Prostate gland (tissue), 2 donors: ENCODE measurements at regions of chr2 and their contacts with region 1.

Region 1: DNA sequence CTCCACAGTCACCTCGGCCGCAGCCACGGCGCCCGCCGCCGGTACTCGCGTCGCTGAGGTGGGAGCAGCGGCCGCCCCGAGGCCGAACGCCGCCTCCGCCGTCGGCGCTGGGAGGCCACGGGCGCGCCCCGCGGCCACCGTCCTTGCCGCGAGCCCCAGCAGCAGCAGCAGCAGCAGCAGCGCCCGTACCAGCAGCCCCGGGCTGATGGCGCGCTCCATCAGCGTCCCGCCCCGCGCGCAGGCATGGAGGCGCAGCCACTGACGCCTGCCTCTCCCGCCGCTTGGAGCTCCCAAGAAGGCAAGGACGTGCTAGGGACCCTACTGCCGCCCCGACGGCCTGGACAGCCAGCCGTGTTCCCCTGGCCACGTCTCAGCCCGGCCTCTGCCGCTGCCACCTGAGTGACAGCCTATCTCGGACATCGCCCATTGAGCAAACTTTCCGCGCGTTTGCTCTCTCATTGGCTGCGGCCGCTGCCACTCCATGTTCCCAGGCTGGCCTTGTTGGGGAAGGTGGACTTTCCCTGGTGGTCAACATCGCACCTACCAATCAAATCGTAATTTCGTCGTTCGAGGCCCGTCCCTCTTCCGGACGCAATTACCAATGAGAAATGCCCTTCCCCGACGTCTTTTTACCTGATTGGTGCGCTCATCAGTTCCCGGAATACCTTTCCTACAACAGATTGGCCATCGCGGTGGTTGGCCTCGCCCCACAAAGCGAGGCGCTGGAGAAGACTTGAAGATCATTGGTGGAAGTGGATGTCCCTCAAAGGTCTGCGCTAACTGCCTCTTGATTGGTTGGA is at the start of gene EIF2AK3:
- DNase-seq: peak; percentile 100
- H3K4me3 ChIP-seq: peak within 1 kb of the TSS; percentile 93
- H3K27ac ChIP-seq: peak within 1 kb of the TSS; percentile 95 to 97
- H3K4me1 ChIP-seq: peaks cover 4% of the 10 kb centered on the region
- H3K27me3 ChIP-seq: no peaks in the 10 kb centered on the region
- CTCF ChIP-seq: peak in 3 of 4 experiments; percentile 12 to 78 (median 46)
- POLR2A ChIP-seq: peak; percentile 100
- total RNA-seq, gene EIF2AK3: 21.4 to 39.1 TPM

Region 2: DNA sequence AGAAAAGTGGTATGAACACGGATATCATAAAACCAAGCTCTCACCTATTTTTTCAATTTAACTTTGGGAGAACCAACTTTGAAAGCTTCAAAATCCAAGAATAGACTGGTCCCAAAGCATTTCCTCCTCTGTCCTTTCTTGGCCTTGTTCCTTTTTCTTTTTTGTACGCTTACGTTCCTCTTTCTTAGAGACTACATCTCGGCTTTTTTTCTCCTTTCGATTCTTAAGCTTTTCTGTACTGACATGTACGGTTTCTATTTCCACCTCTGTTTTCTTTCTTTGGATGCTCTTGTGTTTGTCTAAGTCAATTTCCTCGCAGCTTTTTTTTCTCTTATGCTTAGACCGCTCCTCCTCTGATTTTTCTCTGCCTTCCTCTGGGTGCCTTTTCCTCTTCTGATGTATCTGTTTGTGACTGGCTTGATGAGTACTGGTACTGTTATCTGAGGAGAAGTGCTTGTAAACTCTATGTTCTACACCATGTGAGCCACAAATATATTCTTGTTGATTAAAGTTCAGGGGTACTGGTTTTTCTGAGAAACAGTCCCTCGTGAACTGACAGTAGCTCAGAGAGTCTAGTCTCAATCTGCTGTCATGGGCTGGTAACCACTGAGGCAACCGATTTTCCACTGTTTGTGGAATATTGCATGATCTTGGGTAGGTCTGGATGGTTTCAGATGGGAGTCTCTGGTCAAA is 599.4 kb before region 1 on chr2:
- intact Hi-C with region 1: no loop called
- DNase-seq: no peak
- H3K4me3 ChIP-seq: no peak overlapping the region
- H3K27ac ChIP-seq: no peak overlapping the region
- H3K4me1 ChIP-seq: no peaks in the 10 kb centered on the region
- H3K27me3 ChIP-seq: no peaks in the 10 kb centered on the region
- CTCF ChIP-seq: no peak
- POLR2A ChIP-seq: no peak

Region 3: DNA sequence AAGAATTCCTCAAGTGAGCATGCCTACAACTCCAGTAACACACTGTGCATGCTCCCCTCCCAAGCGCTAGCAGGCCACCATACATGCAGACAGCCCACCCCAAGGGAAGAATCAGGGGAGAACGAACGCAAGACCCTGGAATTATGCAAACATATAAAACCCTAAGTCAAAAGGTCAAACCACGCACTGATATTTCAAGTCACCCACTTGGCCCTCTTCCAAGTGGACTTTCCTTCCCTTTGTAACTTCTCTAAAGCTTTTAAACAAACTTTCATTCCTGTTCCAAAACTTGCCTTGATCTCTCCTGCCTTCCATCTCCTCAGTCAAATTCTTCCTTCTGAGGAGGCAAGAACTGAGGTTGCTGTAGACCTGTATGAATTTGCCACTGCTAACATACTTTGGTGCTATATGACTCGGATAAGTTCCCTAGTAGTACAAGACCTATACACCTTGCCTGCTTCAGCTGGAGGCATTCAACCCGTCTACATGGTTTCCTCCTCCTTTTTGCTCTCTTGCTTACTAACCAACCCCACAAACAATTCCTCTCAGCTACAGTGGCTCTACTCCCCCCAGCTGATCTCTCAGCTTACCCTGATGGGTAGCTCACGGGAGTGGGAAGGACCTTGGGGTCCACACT is 53.1 kb after region 1 on chr2:
- intact Hi-C with region 1: no loop called
- DNase-seq: no peak
- H3K4me3 ChIP-seq: no peak overlapping the region
- H3K27ac ChIP-seq: no peak overlapping the region
- H3K4me1 ChIP-seq: no peaks in the 10 kb centered on the region
- H3K27me3 ChIP-seq: no peaks in the 10 kb centered on the region
- CTCF ChIP-seq: no peak
- POLR2A ChIP-seq: no peak

Region 4: DNA sequence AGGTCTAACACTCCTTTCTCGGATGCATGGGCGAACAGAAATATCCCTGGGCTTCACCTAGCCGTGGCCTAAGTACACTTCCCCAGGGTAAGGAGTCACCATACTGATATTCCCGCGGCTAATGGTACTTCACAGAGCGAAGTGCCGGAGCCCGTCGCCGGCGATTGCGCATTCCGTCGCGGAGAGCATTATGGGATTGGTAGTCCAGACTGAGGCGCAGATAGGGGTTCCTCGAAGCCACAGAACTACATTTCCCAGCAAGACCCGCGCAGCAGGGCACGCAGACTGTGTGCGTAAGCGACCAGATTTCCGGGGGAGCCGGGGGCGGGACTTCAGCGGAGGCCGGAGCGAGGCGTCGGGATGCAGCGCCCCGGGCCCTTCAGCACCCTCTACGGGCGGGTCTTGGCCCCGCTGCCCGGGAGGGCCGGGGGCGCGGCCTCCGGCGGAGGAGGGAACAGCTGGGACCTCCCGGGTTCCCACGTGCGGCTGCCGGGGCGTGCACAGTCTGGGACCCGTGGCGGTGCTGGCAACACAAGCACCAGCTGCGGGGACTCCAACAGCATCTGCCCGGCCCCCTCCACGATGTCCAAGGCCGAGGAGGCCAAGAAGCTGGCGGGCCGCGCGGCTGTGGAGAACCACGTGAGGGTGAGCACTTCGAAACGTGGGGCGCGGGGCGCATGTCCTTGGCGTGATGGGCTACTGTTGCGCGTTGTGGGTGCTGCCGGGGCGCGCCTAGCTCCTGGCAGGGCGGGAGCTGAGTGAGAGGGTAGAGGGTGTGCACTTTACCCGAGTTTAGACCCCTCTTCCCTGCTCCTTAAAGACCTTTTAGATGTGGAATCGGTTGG is 64.3 kb after region 1 on chr2 and contains the start of gene RPIA:
- intact Hi-C with region 1: loop called (anchors 2 kb)
- DNase-seq: peak; percentile 98
- H3K4me3 ChIP-seq: peak within 1 kb of the TSS; percentile 67 to 76
- H3K27ac ChIP-seq: peak within 1 kb of the TSS; percentile 56 to 67
- H3K4me1 ChIP-seq: no peaks in the 10 kb centered on the region
- H3K27me3 ChIP-seq: no peaks in the 10 kb centered on the region
- CTCF ChIP-seq: peak; percentile 13 to 68 (median 52)
- POLR2A ChIP-seq: peak; percentile 42
- total RNA-seq, gene RPIA: 8.2 to 12.2 TPM